ENCODE measurements at regions of chr12 and their contacts with region 1.

Region 1: GRCh38 chr12:52884526-52885293 is 20.2 kb downstream of the KRT8 start:
- H3K4me3 ChIP-seq: no peak overlapping the region
- H3K27ac ChIP-seq: no peak overlapping the region
- H3K4me1 ChIP-seq: no peaks in the 10 kb centered on the region
- CTCF ChIP-seq: peak; percentile 75

Region 2: DNA sequence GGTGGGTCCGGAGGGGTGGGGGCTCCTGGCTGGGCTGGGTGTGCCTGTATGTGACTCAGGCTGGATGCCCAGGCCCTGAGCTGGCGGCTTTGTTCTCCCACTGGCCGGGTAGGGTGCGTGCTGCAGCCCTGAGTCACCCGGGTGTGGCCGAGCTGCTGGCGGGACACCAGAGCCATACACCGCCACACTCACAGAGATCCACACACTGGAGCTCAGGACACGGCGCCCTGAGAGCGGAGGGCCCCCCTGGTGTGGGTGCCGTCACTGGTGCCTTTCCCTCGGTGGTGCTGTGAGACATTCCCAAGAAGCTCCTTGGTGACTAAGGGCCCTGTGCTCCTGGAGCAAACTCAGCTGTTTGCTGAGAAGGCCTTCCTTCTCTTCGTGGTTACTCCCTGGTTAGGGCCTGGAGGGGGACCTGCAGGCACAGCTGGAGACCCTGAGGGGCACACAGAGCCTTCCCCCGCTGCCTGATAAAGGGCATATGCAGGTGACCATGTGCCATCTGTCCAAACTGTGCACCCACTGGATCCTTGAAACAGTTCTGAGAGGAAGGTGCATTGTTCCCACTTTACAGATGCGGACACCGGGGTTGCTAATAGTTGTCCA is 737.2 kb before region 1 on chr12:
- CTCF ChIA-PET with region 1: interaction called, 88 read pairs
- POLR2A ChIA-PET with region 1: interaction called, 5 read pairs
- H3K4me3 ChIP-seq: no peak overlapping the region
- H3K27ac ChIP-seq: no peak overlapping the region
- H3K4me1 ChIP-seq: no peaks in the 10 kb centered on the region; the same call in 1 of the 2 replicates
- CTCF ChIP-seq: no peak

Region 3: DNA sequence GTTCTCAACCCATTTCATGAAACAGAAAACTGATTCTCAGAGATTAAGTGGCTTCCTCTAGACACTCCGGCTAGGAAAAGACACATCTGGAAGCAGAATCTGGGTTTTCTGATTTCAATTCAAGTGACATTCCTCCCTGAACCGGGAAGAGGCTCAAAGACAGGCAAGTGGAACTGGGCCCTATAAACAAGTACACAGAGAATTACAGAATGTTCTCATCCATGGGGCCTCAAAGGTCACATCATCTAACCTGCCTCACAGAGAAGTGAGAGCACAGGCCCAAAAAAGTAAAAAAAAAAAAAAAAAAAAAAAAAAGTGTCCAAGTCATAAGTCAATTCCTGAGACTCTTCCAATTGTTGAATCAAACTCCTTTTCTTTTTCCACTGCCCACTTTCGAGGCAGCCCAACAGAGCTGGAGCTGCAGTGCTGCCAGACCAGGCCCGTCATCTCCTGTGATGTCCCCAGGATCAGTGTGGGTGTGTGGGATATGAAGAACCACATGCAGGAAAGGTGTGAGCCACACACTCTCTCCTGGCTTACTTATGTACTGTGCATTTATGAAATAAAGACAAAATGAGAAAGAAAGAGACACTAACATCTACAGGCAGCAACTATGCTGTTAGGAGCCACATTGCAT is 201.7 kb before region 1 on chr12:
- CTCF ChIA-PET with region 1: no interaction called
- POLR2A ChIA-PET with region 1: no interaction called
- H3K4me3 ChIP-seq: no peak overlapping the region
- H3K27ac ChIP-seq: no peak overlapping the region
- H3K4me1 ChIP-seq: no peaks in the 10 kb centered on the region
- CTCF ChIP-seq: no peak

Region 4: DNA sequence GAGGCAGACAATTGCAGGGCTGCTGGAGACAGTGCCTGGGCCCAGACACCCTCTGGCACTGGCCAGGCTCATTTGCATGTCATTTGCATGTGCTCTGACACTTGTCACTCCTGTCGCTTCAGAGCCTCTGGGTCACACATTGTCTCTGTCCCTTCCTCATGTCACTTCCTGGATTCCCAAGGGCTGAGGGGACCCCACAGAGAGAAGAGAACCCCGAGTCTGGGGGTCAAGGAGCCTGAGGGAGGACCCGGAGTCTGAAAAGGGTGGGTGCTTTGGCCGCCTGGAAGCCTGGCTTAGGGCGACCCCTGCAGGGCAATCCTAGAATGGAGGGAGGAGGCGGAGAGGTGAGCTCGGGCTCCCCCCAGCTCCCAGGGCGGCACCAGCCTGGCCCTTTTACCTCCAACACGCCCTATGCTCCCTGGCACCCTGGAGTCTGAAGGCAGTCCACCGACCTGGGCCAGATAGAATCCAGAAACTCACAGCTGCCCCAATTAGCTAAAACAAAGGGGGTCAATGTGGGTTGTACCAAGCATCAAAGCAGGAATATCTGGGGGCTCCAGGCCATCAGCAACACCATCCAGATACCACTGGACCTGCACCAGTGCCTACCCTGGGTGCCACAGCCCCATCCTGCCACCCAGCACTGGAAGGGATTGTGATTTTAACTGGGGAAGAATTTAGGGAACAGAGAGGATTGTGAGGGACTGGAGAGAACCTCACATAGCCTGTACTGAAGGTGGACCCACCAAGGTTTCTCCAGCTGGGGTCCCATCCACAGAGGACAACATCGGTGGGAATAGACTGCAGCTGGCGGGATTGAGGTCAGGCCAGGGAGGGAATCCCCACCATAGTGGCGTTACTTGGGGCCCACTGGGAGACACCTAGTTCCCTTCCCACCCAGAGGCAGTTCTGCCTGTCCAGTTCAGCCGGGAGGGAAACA is 14.1 kb before region 1 on chr12:
- CTCF ChIA-PET with region 1: interaction called, 41 read pairs
- POLR2A ChIA-PET with region 1: no interaction called
- H3K4me3 ChIP-seq: no peak overlapping the region
- H3K27ac ChIP-seq: no peak overlapping the region
- H3K4me1 ChIP-seq: peaks cover 13% of the 10 kb centered on the region; the same call in 1 of the 2 replicates
- CTCF ChIP-seq: peak; percentile 84

Region 5: GRCh38 chr12:52949413-52950331 is 65.0 kb after region 1 on chr12:
- CTCF ChIA-PET with region 1: interaction called, 32 read pairs
- POLR2A ChIA-PET with region 1: interaction called, 3 read pairs
- H3K4me3 ChIP-seq: peak overlapping the region; percentile 65
- H3K27ac ChIP-seq: peak overlapping the region; percentile 82
- H3K4me1 ChIP-seq: peaks cover 7% of the 10 kb centered on the region; the same call in 1 of the 2 replicates
- CTCF ChIP-seq: peak; percentile 62; the same call in 1 of the 2 replicates

Region 6: DNA sequence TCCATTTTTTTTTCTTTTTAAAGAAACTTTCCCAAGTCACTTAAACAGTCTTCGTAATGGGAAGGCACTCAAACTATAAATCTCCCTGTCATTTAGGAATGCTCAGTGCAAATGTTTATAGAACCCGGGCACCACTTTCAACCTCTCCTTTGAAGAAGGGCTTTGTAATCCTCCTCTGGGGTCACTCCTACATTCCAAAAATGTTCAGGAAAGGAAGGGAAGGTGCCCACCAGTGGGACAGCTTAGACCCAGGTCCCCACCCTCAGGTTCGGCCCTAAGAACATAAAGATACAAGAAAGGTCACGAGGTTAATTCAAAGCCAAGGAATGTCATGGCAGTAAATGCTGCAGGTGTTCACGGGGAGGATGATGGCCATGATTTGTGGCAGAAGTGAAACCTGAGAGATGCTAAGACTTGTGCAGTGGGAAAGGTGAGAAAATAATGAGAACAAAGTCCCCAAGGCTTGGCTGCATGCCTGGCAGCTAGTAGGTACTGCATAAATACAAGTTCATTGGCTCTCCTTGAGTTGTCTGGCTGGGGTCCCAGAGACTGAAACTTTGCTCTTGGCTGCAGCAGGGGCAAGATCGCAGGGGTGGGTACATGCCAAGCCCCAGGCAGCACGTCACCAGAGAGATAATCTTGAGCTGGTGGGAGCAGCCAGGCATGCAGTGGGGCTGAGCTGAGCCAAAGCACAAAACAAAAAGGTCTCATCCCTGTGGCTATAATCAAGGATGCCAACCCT is 85.3 kb after region 1 on chr12:
- CTCF ChIA-PET with region 1: interaction called, 37 read pairs
- POLR2A ChIA-PET with region 1: no interaction called
- H3K4me3 ChIP-seq: no peak overlapping the region
- H3K27ac ChIP-seq: no peak overlapping the region
- H3K4me1 ChIP-seq: peaks cover 4% of the 10 kb centered on the region
- CTCF ChIP-seq: no peak